ENCODE measurements at regions of chr12 and their contacts with region 1.

Region 1: GRCh38 chr12:52121824-52122539 is 42.5 kb downstream of the SMIM41 start:
- DNase-seq: peak; percentile 59 to 90
- H3K4me3 ChIP-seq: peak overlapping the region in 2 of 4 experiments; percentile 4 to 51; a peak in 3 of 8 replicates
- H3K27ac ChIP-seq: no peak overlapping the region
- H3K4me1 ChIP-seq: peaks cover 29 to 46% (median 34%) of the 10 kb centered on the region in 4 experiments
- H3K27me3 ChIP-seq: no peaks in the 10 kb centered on the region
- CTCF ChIP-seq: peak; percentile 73 to 83 (median 78)
- EP300 ChIP-seq: 0 out of 3 replicates have a peak, but pooled peaks of 1 of the 2 experiments have one; percentile 28
- POLR2A ChIP-seq: no peak
- RAD21 ChIP-seq: peak; percentile 60 to 74

Region 2: GRCh38 chr12:52004042-52004648 is 117.8 kb before region 1 on chr12:
- CTCF ChIA-PET with region 1: interaction called, 22 read pairs
- POLR2A ChIA-PET with region 1: no interaction called
- DNase-seq: peak in 1 of 2 experiments; percentile 81
- H3K4me3 ChIP-seq: no peak overlapping the region
- H3K27ac ChIP-seq: no peak overlapping the region
- H3K4me1 ChIP-seq: peaks cover 0 to 16% (median 8%) of the 10 kb centered on the region in 4 experiments; a peak in 6 of 7 replicates
- H3K27me3 ChIP-seq: peaks cover 19 to 47% (median 44%) of the 10 kb centered on the region in 4 experiments
- CTCF ChIP-seq: peak in 2 of 3 experiments; percentile 83 to 93; a peak in 3 of 4 replicates
- EP300 ChIP-seq: no peak
- POLR2A ChIP-seq: no peak
- RAD21 ChIP-seq: peak; percentile 91 to 95

Region 3: GRCh38 chr12:52069327-52070184 is 52.4 kb before region 1 on chr12 and contains the start of gene ATG101:
- CTCF ChIA-PET with region 1: interaction called, 11 read pairs
- POLR2A ChIA-PET with region 1: interaction called, 5 read pairs
- DNase-seq: peak; percentile 82 to 90
- H3K4me3 ChIP-seq: peak within 1 kb of the TSS; percentile 89 to 97 (median 95)
- H3K27ac ChIP-seq: peak within 1 kb of the TSS; percentile 99
- H3K4me1 ChIP-seq: peaks cover 0 to 12% (median 3%) of the 10 kb centered on the region in 4 experiments; a peak in 4 of 7 replicates
- H3K27me3 ChIP-seq: no peaks in the 10 kb centered on the region; a peak in 2 of 7 replicates
- CTCF ChIP-seq: peak; percentile 88 to 96 (median 96)
- EP300 ChIP-seq: peak in 1 of 2 experiments; percentile 100; a peak in 2 of 3 replicates
- POLR2A ChIP-seq: peak in 1 of 2 experiments; percentile 69; a peak in 1 of 3 replicates
- RAD21 ChIP-seq: peak; percentile 19 to 29; a peak in 3 of 4 replicates
- total RNA-seq, gene ATG101: 48.9 and 49.8 TPM in 2 replicates

Region 4: GRCh38 chr12:52087961-52088820 is 33.8 kb before region 1 on chr12:
- CTCF ChIA-PET with region 1: interaction called, 36 read pairs
- POLR2A ChIA-PET with region 1: no interaction called
- DNase-seq: no peak
- H3K4me3 ChIP-seq: no peak overlapping the region
- H3K27ac ChIP-seq: no peak overlapping the region
- H3K4me1 ChIP-seq: peaks cover 0 to 1% (median 0%) of the 10 kb centered on the region in 4 experiments; a peak in 2 of 7 replicates
- H3K27me3 ChIP-seq: no peaks in the 10 kb centered on the region
- CTCF ChIP-seq: no peak
- EP300 ChIP-seq: no peak
- POLR2A ChIP-seq: no peak
- RAD21 ChIP-seq: no peak

Region 5: GRCh38 chr12:52139552-52140062 is 17.6 kb after region 1 on chr12:
- CTCF ChIA-PET with region 1: interaction called, 16 read pairs
- POLR2A ChIA-PET with region 1: interaction called, 10 read pairs
- DNase-seq: peak in 1 of 2 experiments; percentile 90
- H3K4me3 ChIP-seq: no peak overlapping the region
- H3K27ac ChIP-seq: no peak overlapping the region
- H3K4me1 ChIP-seq: peaks cover 0 to 11% (median 5%) of the 10 kb centered on the region in 4 experiments; a peak in 4 of 7 replicates
- H3K27me3 ChIP-seq: no peaks in the 10 kb centered on the region
- CTCF ChIP-seq: peak in 2 of 3 experiments; percentile 81 to 88; a peak in 3 of 4 replicates
- EP300 ChIP-seq: no peak
- POLR2A ChIP-seq: no peak
- RAD21 ChIP-seq: peak; percentile 76 to 87

Region 6: GRCh38 chr12:52147367-52147972 is 25.5 kb after region 1 on chr12:
- CTCF ChIA-PET with region 1: interaction called, 16 read pairs
- POLR2A ChIA-PET with region 1: interaction called, 10 read pairs
- DNase-seq: no peak
- H3K4me3 ChIP-seq: no peak overlapping the region
- H3K27ac ChIP-seq: peak overlapping the region; percentile 73
- H3K4me1 ChIP-seq: peaks cover 8 to 44% (median 19%) of the 10 kb centered on the region in 4 experiments
- H3K27me3 ChIP-seq: no peaks in the 10 kb centered on the region; a peak in 1 of 7 replicates
- CTCF ChIP-seq: no peak
- EP300 ChIP-seq: no peak
- POLR2A ChIP-seq: no peak
- RAD21 ChIP-seq: no peak

Measured in H1 (cell line).